B cell (primary cell): ENCODE measurements at regions of chrX and their contacts with region 1.

Region 1: DNA sequence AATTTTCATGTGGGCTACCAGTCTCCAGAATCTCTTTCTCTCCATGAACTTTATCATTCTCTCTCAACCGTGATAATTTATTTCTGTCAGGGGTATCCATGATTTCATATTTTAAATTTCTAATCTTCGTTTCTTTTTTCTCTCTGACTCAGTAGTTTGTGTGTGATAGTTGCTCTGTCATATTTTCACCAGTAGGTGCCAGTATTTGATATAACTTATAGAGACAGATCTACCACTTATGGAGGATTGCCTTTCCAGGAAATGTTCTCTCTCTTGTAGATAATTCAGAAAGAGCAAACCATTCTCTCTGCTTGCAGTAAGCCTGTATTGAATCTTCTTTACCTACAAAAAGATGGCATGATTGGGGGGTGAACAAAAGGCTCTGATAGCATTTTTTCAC is 79.3 kb upstream of the DYNLT3 start:
- DNase-seq: peak; percentile 5
- ATAC-seq: no peak
- H3K4me3 ChIP-seq: no peak overlapping the region
- H3K4me3 Mint-ChIP-seq: no peak overlapping the region
- H3K27ac ChIP-seq: no peak overlapping the region
- H3K27ac Mint-ChIP-seq: no peak overlapping the region
- H3K4me1 ChIP-seq: no peaks in the 10 kb centered on the region
- H3K4me1 Mint-ChIP-seq: no peaks in the 10 kb centered on the region
- H3K27me3 ChIP-seq: peaks cover 0 to 4% (median under 1%) of the 10 kb centered on the region in 4 experiments
- H3K27me3 Mint-ChIP-seq: peaks cover 18% of the 10 kb centered on the region
- CTCF ChIP-seq: peak; percentile 14

Region 2: GRCh38 chrX:37896511-37896890 is 30.2 kb before region 1 on chrX:
- CTCF ChIA-PET with region 1: no interaction called
- POLR2A ChIA-PET with region 1: no interaction called
- intact Hi-C with region 1: no loop called
- DNase-seq: no peak
- ATAC-seq: no peak
- H3K4me3 ChIP-seq: no peak overlapping the region
- H3K4me3 Mint-ChIP-seq: no peak overlapping the region
- H3K27ac ChIP-seq: no peak overlapping the region
- H3K27ac Mint-ChIP-seq: no peak overlapping the region
- H3K4me1 ChIP-seq: no peaks in the 10 kb centered on the region
- H3K4me1 Mint-ChIP-seq: no peaks in the 10 kb centered on the region
- H3K27me3 ChIP-seq: no peaks in the 10 kb centered on the region
- H3K27me3 Mint-ChIP-seq: peaks cover 5% of the 10 kb centered on the region
- CTCF ChIP-seq: no peak

Region 3: DNA sequence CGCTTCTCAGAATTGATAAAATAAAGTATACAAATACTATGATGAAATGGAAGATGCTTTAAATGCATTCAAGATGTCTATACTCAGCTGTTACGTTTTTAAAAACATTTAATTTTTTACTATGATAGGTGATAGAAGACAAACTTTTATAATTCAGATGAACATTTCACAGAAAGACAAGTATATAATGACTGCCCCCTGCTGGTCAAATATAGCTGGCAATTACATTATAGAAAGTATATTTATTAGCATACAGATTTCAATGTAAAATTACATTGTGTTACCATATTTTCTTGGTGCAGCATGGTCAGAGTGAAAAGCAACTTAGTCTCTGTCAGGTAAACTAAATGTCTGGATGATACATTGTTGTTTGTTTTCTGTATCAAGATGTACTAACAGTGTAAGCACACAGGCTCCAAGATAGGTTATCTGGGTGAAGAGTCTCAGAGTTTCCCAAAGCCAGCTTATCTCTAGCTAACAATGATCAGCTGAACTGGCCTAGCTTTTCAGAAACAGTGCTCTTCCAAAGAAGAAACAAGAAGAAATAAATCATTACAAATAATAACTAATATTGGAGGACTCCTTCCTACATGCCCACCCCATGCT is 239.9 kb after region 1 on chrX:
- CTCF ChIA-PET with region 1: interaction called, 4 read pairs
- POLR2A ChIA-PET with region 1: no interaction called
- intact Hi-C with region 1: loop called (anchors 10 kb)
- DNase-seq: peak; percentile 37
- ATAC-seq: no peak
- H3K4me3 ChIP-seq: no peak overlapping the region
- H3K4me3 Mint-ChIP-seq: no peak overlapping the region
- H3K27ac ChIP-seq: no peak overlapping the region
- H3K27ac Mint-ChIP-seq: no peak overlapping the region
- H3K4me1 ChIP-seq: no peaks in the 10 kb centered on the region
- H3K4me1 Mint-ChIP-seq: no peaks in the 10 kb centered on the region
- H3K27me3 ChIP-seq: no peaks in the 10 kb centered on the region
- H3K27me3 Mint-ChIP-seq: peaks cover 3% of the 10 kb centered on the region
- CTCF ChIP-seq: peak; percentile 65